ENCODE measurements at regions of chr14 and their contacts with region 1.

Region 1: DNA sequence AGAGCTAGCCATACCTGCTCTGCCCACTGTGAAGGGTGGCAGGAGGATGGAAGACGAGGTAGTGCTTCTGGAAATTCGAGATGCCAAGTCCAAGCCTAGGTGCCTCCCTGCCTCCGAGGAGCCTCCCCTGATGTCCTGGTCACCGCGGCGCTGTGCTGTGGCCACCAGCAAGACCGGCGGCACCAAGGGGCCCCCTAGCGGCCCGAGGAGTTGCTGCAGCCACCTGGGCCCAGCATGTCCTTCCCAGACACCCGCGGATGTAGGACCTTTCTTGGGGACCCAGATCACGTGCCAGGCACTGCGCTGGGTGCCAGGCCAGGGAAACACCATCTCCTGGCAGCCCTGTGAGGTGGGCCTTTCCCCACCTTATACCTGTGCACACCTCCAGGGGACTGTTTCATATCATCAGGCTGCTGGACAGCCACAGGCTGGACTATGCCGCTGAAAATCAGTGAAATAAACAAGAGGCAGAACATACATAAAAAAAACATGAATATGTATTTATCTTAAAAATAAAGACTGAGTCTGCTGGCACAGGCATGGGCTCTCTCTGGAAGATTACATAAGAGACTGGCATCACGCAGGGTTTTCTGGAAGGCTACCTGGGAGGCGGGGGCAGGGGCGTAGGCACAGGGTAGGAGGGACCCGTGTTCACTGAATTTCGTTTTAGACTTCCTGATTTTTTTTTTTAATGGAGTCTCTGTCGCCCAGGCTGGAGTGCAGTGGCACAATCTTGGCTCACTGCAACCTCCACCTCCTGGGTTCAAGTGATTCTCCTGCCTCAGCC is 15.9 kb upstream of the HHIPL1 start:
- DNase-seq: peak; percentile 30
- ATAC-seq: peak; percentile 95
- H3K4me3 ChIP-seq: no peak overlapping the region
- H3K27ac ChIP-seq: no peak overlapping the region; the same call in 1 of the 2 replicates
- H3K4me1 ChIP-seq: peaks cover 5% of the 10 kb centered on the region
- H3K27me3 ChIP-seq: no peaks in the 10 kb centered on the region
- CTCF ChIP-seq: peak; percentile 96

Region 2: GRCh38 chr14:98633380-98633779 is 995.6 kb before region 1 on chr14:
- CTCF ChIA-PET with region 1: no interaction called
- POLR2A ChIA-PET with region 1: no interaction called
- in situ Hi-C with region 1: no loop called
- intact Hi-C with region 1: no loop called
- DNase-seq: no peak
- ATAC-seq: no peak
- H3K4me3 ChIP-seq: no peak overlapping the region
- H3K27ac ChIP-seq: no peak overlapping the region
- H3K4me1 ChIP-seq: no peaks in the 10 kb centered on the region
- H3K27me3 ChIP-seq: no peaks in the 10 kb centered on the region
- CTCF ChIP-seq: no peak

Region 3: DNA sequence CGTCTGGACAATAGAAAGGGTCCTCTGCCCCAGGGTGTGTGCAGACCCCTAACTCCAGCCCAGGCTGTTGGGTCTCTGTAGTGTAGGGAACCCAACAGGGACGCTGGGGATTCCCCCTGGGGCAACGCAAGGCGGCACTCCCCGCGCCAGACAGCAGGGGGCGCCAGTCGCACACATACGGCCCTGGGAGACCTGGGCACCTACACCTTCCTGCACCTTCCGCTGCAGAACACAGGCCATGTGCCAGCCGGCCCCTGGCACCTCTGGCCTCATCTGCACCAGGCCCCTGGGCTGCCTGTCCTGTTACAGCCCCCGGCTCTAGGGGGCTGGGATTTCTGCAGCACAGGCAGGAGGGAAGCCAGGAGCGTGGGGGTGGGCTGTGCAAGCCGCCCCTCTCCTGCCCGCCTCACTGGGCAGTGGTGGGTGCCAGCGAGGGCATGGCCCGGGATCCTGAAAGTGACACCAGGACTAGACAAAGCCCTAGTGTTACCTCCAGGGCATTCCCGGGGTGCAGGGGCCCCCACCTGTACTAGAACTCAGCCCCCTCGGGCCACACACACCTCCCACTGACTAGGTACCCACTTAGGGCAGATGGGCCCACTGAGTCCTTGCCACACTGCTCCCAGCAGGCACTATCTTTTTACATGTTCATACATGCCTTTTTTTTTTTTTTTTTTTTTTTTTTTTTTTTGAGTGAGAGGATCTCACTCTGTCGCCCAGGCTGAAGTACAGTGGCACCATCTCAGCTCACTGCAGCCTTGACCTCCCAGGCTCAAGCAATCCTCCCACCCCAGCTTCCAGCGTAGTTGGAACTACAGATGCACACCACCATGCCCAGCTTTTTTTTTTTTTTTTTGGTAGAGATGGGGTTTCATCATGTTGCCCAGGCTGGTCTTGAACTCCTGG is 110.3 kb before region 1 on chr14:
- CTCF ChIA-PET with region 1: interaction called, 3 read pairs
- POLR2A ChIA-PET with region 1: no interaction called
- in situ Hi-C with region 1: no loop called
- intact Hi-C with region 1: loop called (anchors 2 kb)
- DNase-seq: peak; percentile 42
- ATAC-seq: peak; percentile 65
- H3K4me3 ChIP-seq: no peak overlapping the region
- H3K27ac ChIP-seq: no peak overlapping the region
- H3K4me1 ChIP-seq: peaks cover 47% of the 10 kb centered on the region
- H3K27me3 ChIP-seq: no peaks in the 10 kb centered on the region
- CTCF ChIP-seq: peak; percentile 93

Region 4: GRCh38 chr14:99563233-99564129 is 65.5 kb before region 1 on chr14:
- CTCF ChIA-PET with region 1: no interaction called
- POLR2A ChIA-PET with region 1: no interaction called
- in situ Hi-C with region 1: no loop called
- intact Hi-C with region 1: no loop called
- DNase-seq: no peak
- ATAC-seq: peak; percentile 91
- H3K4me3 ChIP-seq: no peak overlapping the region
- H3K27ac ChIP-seq: peak overlapping the region; percentile 74
- H3K4me1 ChIP-seq: peaks cover 81% of the 10 kb centered on the region
- H3K27me3 ChIP-seq: no peaks in the 10 kb centered on the region
- CTCF ChIP-seq: peak; percentile 76; the same call in 1 of the 2 replicates

Region 5: GRCh38 chr14:99579903-99580570 is 49.0 kb before region 1 on chr14:
- CTCF ChIA-PET with region 1: interaction called, 4 read pairs
- POLR2A ChIA-PET with region 1: interaction called, 12 read pairs
- in situ Hi-C with region 1: no loop called
- intact Hi-C with region 1: no loop called
- DNase-seq: no peak
- ATAC-seq: peak; percentile 24; the same call in 1 of the 2 replicates
- H3K4me3 ChIP-seq: no peak overlapping the region
- H3K27ac ChIP-seq: peak overlapping the region; percentile 74
- H3K4me1 ChIP-seq: peaks cover 49% of the 10 kb centered on the region
- H3K27me3 ChIP-seq: no peaks in the 10 kb centered on the region
- CTCF ChIP-seq: no peak

Region 6: GRCh38 chr14:99654235-99654966 is 25.4 kb after region 1 on chr14:
- CTCF ChIA-PET with region 1: no interaction called
- POLR2A ChIA-PET with region 1: no interaction called
- in situ Hi-C with region 1: no loop called
- intact Hi-C with region 1: no loop called
- DNase-seq: no peak
- ATAC-seq: peak; percentile 69; the same call in 1 of the 2 replicates
- H3K4me3 ChIP-seq: no peak overlapping the region
- H3K27ac ChIP-seq: no peak overlapping the region
- H3K4me1 ChIP-seq: no peaks in the 10 kb centered on the region
- H3K27me3 ChIP-seq: no peaks in the 10 kb centered on the region
- CTCF ChIP-seq: no peak

Region 7: GRCh38 chr14:99910337-99911309 is 281.6 kb after region 1 on chr14:
- CTCF ChIA-PET with region 1: interaction called, 13 read pairs
- POLR2A ChIA-PET with region 1: no interaction called
- in situ Hi-C with region 1: no loop called
- intact Hi-C with region 1: no loop called
- DNase-seq: peak; percentile 65
- ATAC-seq: peak; percentile 91
- H3K4me3 ChIP-seq: no peak overlapping the region
- H3K27ac ChIP-seq: peak overlapping the region; percentile 12; the same call in 1 of the 2 replicates
- H3K4me1 ChIP-seq: peaks cover 10% of the 10 kb centered on the region
- H3K27me3 ChIP-seq: no peaks in the 10 kb centered on the region
- CTCF ChIP-seq: no peak

Measured in Panc1 (cell line).